Dendritic cell treated with granulocyte-macrophage colony-stimulating factor and Interleukin-4, amounts not matched to agents 40 ng/mL and 50 ng/mL, for 4 days (primary cell): ENCODE measurements at regions of chr4 and their contacts with region 1.

Region 1: GRCh38 chr4:164779811-164780216 is 25.9 kb downstream of the SMIM31 start:
- H3K4me3 Mint-ChIP-seq: no peak overlapping the region
- H3K27ac Mint-ChIP-seq: no peak overlapping the region
- H3K4me1 Mint-ChIP-seq: no peaks in the 10 kb centered on the region
- H3K27me3 Mint-ChIP-seq: no peaks in the 10 kb centered on the region

Region 2: GRCh38 chr4:165101641-165102040 is 321.8 kb after region 1 on chr4:
- intact Hi-C with region 1: loop called (anchors 5 kb)
- H3K4me3 Mint-ChIP-seq: no peak overlapping the region
- H3K27ac Mint-ChIP-seq: no peak overlapping the region
- H3K4me1 Mint-ChIP-seq: peaks cover 7% of the 10 kb centered on the region
- H3K27me3 Mint-ChIP-seq: no peaks in the 10 kb centered on the region

Region 3: DNA sequence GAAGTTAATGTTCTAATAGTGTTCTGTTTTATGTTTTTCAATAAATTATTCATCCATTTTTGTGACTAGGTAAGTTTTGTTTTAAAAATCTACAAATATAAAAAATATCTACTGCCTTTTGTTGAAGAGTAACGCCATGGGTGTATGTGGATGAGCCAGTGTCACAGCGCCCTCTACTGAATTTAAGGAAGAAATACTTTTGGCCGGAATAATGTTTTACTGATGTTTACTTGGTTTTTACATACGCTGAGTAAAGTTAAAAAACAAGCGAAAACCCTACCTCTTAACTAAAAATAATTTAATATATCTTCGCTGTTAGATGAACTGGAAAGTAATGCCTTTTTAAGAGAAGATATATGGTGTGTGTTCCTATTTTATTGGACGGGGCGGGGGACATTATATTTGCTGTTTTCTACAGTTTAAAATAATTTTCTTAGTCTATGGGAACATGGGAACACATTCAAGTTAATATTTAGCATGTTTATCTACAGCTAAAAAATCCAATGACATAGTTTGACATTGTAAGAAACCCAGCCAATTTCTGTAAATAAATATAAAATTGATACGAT is 685.1 kb after region 1 on chr4:
- intact Hi-C with region 1: loop called (anchors 10 kb)
- H3K4me3 Mint-ChIP-seq: no peak overlapping the region
- H3K27ac Mint-ChIP-seq: no peak overlapping the region
- H3K4me1 Mint-ChIP-seq: no peaks in the 10 kb centered on the region
- H3K27me3 Mint-ChIP-seq: no peaks in the 10 kb centered on the region